ENCODE measurements at regions of chr11 and their contacts with region 1.

Region 1: DNA sequence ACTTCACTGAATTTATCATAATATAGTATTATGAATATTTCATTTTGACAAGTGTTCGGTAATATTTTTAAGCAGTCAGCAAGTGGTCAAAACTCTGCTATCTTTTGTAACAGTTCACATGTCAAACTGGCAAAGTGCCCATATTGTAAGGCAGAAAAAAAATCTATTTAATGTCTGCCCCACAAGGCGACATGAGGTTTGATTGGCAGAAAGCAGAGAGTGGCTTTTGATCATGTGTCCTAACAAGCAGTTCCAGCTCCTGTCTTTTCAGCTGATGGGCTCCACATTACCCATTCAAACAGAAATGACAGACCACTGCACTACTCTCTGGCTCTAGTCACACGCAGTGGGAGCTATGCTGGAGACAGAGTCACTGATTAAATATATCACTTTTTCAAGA is 59.0 kb downstream of the SOX6 start:
- DNase-seq: peak; percentile 10 to 75 (median 22)
- ATAC-seq: peak; percentile 64
- H3K4me3 ChIP-seq: no peak overlapping the region
- H3K27ac ChIP-seq: peak overlapping the region; percentile 63
- H3K4me1 ChIP-seq: peaks cover 0 to 44% of the 10 kb centered on the region in 2 experiments; a peak in 4 of 5 replicates
- H3K27me3 ChIP-seq: no peaks in the 10 kb centered on the region
- CTCF ChIP-seq: no peak
- EP300 ChIP-seq: 0 out of 2 replicates have a peak, but pooled peaks have one; percentile 9
- POLR2A ChIP-seq: no peak
- RAD21 ChIP-seq: no peak

Region 2: DNA sequence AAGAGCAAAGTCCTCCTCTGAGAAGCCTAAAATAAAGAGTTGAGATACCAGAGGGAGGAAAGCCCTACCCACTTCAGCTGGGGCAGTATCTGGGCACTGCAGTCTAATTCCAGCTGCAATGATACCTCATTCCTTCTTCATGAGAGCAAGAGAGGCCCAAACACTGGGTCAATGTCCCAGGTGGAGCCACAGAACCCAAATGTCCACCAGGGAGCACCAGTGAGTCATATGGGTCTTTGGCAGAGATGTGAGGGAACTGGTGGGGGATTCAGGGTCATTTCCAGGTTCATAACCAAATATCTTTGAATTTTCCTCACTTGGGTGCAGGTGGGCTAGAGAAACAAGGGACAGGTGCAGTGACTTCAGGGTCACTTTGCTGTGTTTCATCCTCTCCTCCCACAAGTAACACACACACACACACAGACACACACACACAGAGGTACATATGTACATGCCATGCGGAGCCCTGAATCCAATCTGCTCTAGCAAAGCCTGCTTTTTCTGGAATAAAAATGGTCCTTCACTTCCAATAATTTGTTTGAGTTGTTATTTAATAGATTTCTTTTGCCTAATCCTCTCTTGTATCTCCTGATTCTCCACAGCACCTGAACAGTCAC is 526.4 kb before region 1 on chr11:
- CTCF ChIA-PET with region 1: no interaction called
- POLR2A ChIA-PET with region 1: no interaction called
- in situ Hi-C with region 1: no loop called
- intact Hi-C with region 1: no loop called
- DNase-seq: peak; percentile 39 to 61 (median 50)
- ATAC-seq: peak; percentile 87
- H3K4me3 ChIP-seq: no peak overlapping the region
- H3K27ac ChIP-seq: no peak overlapping the region
- H3K4me1 ChIP-seq: no peaks in the 10 kb centered on the region
- H3K27me3 ChIP-seq: peaks cover 0 to 13% of the 10 kb centered on the region in 2 experiments; a peak in 1 of 5 replicates
- CTCF ChIP-seq: peak; percentile 66 to 76 (median 69)
- EP300 ChIP-seq: no peak
- POLR2A ChIP-seq: no peak
- RAD21 ChIP-seq: peak; percentile 36 to 50; a peak in 3 of 4 replicates

Region 3: GRCh38 chr11:16252373-16252772 is 45.0 kb before region 1 on chr11:
- CTCF ChIA-PET with region 1: no interaction called
- POLR2A ChIA-PET with region 1: no interaction called
- in situ Hi-C with region 1: no loop called
- intact Hi-C with region 1: no loop called
- DNase-seq: peak in 2 of 4 experiments; percentile 20 to 22
- ATAC-seq: peak; percentile 70; the same call in 2 of the 3 replicates
- H3K4me3 ChIP-seq: no peak overlapping the region
- H3K27ac ChIP-seq: no peak overlapping the region
- H3K4me1 ChIP-seq: no peaks in the 10 kb centered on the region
- H3K27me3 ChIP-seq: no peaks in the 10 kb centered on the region
- CTCF ChIP-seq: peak; percentile 2 to 38 (median 32); a peak in 1 of 6 replicates
- EP300 ChIP-seq: no peak
- POLR2A ChIP-seq: no peak
- RAD21 ChIP-seq: peak in 1 of 2 experiments; percentile 20; a peak in 1 of 4 replicates

Region 4: DNA sequence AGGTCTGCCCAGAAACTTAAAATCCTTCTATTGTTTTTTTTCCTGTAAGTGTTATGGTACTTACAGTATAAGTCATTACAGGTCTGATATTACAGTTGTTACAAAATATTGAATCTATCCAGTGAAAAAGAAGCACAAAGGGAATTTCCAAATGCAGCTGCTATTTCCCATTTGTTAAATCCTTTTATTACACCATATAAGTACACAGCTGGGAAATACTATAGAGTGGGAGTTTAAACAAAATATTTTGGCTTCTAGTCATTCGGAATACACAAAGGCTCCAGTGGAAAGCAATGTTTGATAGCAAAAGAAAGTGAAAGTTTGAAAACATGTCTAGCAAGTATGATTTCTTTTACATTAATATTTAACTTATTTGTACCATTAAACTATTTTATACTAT is 41.1 kb after region 1 on chr11:
- CTCF ChIA-PET with region 1: no interaction called
- POLR2A ChIA-PET with region 1: interaction called, 3 read pairs
- in situ Hi-C with region 1: no loop called
- intact Hi-C with region 1: loop called (anchors 2 kb)
- DNase-seq: no peak
- ATAC-seq: peak; percentile 42
- H3K4me3 ChIP-seq: no peak overlapping the region
- H3K27ac ChIP-seq: peak overlapping the region; percentile 89
- H3K4me1 ChIP-seq: peaks cover 0 to 28% of the 10 kb centered on the region in 2 experiments; a peak in 4 of 5 replicates
- H3K27me3 ChIP-seq: no peaks in the 10 kb centered on the region
- CTCF ChIP-seq: no peak
- EP300 ChIP-seq: no peak
- POLR2A ChIP-seq: no peak
- RAD21 ChIP-seq: no peak